Activated T-helper 2 cell treated with anti-CD3 and anti-CD28 coated beads, Interferon-gamma antibody, Interleukin-2, Interleukin-4, amounts not matched to agents 10 μg/mL and 5 μg/mL and 100 μg/mL, durations not matched to agents 14 hours and 24 hours and 36 hours (primary cell): ENCODE measurements at regions of chr7 and their contacts with region 1.

Region 1: GRCh38 chr7:130486114-130486958 is 5.5 kb upstream of the MEST start:
- DNase-seq: peak; percentile 37
- H3K4me3 Mint-ChIP-seq: peak overlapping the region; percentile 78
- H3K27ac Mint-ChIP-seq: peak overlapping the region; percentile 3
- H3K4me1 Mint-ChIP-seq: peaks cover 22% of the 10 kb centered on the region
- H3K27me3 Mint-ChIP-seq: peaks cover 58% of the 10 kb centered on the region

Region 2: GRCh38 chr7:129780257-129780973 is 705.9 kb before region 1 on chr7:
- intact Hi-C with region 1: loop called (anchors 10 kb)
- DNase-seq: peak; percentile 44
- H3K4me3 Mint-ChIP-seq: peak overlapping the region; percentile 58
- H3K27ac Mint-ChIP-seq: no peak overlapping the region
- H3K4me1 Mint-ChIP-seq: peaks cover 22% of the 10 kb centered on the region
- H3K27me3 Mint-ChIP-seq: peaks cover 61% of the 10 kb centered on the region

Region 3: DNA sequence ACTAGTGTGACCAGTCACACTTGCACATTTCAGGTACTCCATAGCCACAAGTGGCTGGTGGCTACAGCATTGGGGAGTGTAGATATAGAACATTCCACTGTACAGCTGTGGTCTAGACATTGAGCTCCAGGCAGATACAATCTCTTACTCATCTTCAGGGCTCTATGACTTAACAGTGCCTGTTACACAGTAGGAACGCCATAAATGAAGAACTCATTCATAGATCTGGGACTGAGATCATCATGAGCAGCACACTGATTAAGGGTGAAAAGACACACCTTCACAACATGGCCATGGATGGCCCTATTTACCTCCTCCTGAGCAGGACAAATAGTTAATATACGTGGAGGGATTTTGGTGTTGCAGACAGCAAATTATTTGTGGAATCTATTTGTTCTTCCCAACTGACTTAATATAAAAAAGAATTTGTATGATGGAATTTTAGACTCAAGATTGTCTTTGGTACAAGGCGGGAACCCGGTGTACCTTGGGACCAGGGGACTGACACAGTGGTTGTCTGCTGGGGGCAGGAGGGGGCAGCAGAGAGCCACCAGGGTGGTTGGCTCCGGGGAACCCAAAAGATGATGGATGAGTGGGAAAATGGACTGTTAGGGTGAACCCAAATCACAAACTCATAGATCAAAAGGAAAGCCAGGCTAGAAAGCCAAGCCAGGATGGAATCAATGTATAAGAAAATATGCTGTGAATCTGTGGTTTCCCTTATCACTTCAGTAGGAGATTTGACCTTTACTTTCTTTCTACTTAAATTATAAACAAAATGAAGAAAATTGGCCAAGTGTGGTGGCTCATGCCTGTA is 243.9 kb before region 1 on chr7:
- intact Hi-C with region 1: loop called (anchors 10 kb)
- DNase-seq: peak; percentile 27
- H3K4me3 Mint-ChIP-seq: no peak overlapping the region
- H3K27ac Mint-ChIP-seq: no peak overlapping the region
- H3K4me1 Mint-ChIP-seq: peaks cover 17% of the 10 kb centered on the region
- H3K27me3 Mint-ChIP-seq: peaks cover 9% of the 10 kb centered on the region

Region 4: DNA sequence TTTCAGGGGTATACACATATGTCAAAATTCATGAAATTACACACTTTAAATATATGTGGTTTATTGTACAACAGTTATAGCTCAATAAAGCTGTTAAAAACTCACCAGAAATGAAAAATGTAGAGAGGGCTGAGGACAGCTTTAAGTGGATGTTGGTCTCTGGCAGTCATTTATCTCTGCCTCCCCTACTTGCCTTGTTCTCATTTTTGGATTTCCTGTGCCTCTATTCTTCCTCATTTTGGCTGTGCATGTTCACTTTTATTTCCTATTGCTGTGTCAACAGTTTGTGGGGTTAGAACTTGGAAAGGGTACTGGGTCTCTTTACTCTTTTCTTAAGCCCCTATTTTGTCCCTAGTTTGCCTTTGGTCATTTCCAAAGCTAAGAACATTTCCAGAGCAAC is 13.0 kb before region 1 on chr7:
- intact Hi-C with region 1: no loop called
- DNase-seq: no peak
- H3K4me3 Mint-ChIP-seq: no peak overlapping the region
- H3K27ac Mint-ChIP-seq: no peak overlapping the region
- H3K4me1 Mint-ChIP-seq: no peaks in the 10 kb centered on the region
- H3K27me3 Mint-ChIP-seq: peaks cover 5% of the 10 kb centered on the region

Region 5: GRCh38 chr7:130721486-130722280 is 235.3 kb after region 1 on chr7:
- intact Hi-C with region 1: loop called (anchors 5 kb)
- DNase-seq: no peak
- H3K4me3 Mint-ChIP-seq: no peak overlapping the region
- H3K27ac Mint-ChIP-seq: no peak overlapping the region
- H3K4me1 Mint-ChIP-seq: no peaks in the 10 kb centered on the region
- H3K27me3 Mint-ChIP-seq: peaks cover 18% of the 10 kb centered on the region

Region 6: DNA sequence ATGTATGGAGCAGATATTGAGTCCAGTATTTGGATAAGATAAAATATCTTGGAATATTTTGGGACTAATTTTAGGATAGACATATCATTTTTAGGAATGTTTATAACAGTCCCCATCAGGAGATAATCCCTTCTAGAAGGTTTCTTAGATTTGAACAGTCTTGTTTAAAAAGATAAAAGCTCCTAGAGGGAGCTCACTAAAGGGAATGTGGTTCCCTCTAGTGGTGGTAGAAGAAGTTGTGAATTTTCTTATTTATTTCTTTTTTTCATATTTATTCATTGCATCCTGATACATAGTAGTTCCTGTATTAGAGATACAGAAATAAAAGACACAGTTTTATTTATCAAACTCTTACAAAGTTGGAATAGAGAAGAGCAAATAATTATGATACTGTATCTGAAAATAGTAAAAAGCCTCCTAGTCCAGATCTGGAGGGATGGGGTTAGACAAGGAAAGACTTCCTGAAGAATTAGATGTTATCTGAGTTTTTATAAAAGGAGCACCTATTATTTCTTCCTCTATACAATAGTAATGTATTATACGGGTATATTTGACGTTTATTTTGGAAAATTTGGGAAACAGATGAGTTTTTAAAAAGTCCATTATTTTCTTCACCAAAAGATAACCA is 272.2 kb after region 1 on chr7:
- intact Hi-C with region 1: loop called (anchors 5 kb)
- DNase-seq: no peak
- H3K4me3 Mint-ChIP-seq: no peak overlapping the region
- H3K27ac Mint-ChIP-seq: no peak overlapping the region
- H3K4me1 Mint-ChIP-seq: no peaks in the 10 kb centered on the region
- H3K27me3 Mint-ChIP-seq: peaks cover 10% of the 10 kb centered on the region